ENCODE measurements at regions of chr15 and their contacts with region 1.

Region 1: GRCh38 chr15:77821188-77821958 is 188.7 kb upstream of the LINGO1 start:
- DNase-seq: no peak
- ATAC-seq: peak; percentile 69 to 82 (median 74)
- H3K4me3 ChIP-seq: no peak overlapping the region
- H3K27ac ChIP-seq: no peak overlapping the region
- H3K4me1 ChIP-seq: no peaks in the 10 kb centered on the region
- H3K27me3 ChIP-seq: peaks cover 0 to 54% (median 32%) of the 10 kb centered on the region in 3 donors
- CTCF ChIP-seq: peak; percentile 52

Region 2: DNA sequence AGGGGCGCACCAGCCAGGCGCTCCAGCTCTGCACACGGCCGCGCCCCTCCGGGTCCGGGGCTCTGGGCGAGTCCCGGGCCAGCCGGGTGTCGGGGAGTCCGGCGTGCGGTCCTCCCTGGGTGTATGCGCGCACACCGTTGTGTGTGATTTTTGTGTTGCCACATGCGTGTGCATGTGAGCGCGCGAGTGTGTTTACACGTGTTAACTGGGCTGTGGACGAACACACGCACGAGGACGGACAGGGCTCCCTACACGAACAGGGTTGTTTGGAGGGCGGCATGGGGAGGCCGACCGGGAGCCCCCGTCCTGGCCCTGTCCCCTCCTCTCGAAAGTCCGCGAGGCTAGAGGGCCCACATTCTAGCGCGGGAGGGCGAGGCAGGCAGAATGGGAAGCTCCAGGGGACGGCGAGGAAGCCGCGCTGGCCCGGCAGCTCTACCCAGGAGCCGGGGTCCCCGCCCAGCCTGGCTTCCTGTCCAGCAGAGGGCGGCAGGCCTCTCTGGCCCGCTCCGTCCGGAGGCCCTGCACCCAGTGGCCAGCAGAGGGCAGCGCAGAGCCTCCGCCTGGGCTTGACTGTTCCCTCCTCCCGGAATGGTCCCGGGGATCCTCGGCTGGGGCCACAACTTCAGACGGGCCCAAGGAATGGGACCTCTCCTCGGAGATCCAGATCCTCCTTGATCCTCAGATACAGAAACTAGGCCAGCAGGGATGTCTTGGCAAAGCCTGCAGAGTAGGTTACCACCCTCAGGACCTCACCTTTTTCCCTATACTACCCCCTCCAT is 188.1 kb before region 1 on chr15:
- intact Hi-C with region 1: loop called in 1 of 2 experiments (anchors 1 kb)
- DNase-seq: peak; percentile 91 to 93
- ATAC-seq: peak; percentile 96 to 98 (median 97)
- H3K4me3 ChIP-seq: peak overlapping the region; percentile 65
- H3K27ac ChIP-seq: no peak overlapping the region
- H3K4me1 ChIP-seq: peaks cover 4% of the 10 kb centered on the region
- H3K27me3 ChIP-seq: peaks cover 0 to 60% (median 12%) of the 10 kb centered on the region in 3 donors
- CTCF ChIP-seq: peak; percentile 100

Region 3: DNA sequence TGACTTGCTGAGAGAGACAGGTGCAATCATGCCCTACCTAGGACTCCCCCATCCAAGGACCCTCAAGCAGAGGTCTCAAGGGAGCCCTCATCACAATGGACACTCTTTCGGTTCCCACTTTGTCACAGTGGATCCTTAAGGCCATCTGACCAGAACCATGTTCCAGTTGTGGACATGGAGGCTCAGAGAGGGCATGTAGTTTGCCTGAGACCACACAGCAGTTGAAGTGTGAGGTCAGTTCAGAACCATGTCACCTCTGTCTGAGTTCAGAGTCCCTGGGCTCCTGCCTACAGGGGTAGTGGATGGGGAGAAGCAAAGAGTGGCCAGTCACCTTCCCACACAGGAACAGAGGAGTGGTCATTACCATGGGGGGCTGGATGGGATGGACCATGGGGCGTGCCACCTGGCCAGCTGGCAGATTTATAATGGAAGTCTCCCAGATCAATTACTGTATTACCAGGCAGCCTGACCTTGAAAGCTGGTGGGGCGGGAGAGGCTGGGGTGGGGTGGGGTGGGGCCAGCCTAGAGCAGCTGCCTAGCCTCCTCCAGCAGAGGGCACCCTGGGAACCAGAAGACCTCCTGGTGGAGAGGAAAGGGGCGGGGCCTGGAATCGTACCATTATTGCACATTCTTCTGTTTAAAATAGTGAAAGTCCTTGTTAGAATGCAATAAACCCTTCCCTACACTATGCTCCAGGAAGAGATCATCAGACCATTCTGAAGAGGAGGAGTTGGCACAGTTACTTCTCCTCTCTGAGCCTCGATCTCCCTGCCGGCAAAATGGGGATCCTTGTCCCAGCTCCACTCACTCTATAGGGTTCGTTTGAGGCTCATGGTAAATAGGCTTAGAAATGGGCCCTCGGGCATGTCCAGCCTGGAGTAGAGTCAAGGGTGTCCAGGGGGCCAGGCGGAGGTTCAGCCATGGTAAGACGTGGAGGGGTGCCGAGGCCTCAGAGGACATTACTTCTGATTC is 161.7 kb before region 1 on chr15:
- intact Hi-C with region 1: loop called in 1 of 2 experiments (anchors 5 kb)
- DNase-seq: peak in 1 of 2 donors; percentile 41
- ATAC-seq: peak in 1 of 4 donors; percentile 38
- H3K4me3 ChIP-seq: no peak overlapping the region
- H3K27ac ChIP-seq: no peak overlapping the region
- H3K4me1 ChIP-seq: no peaks in the 10 kb centered on the region
- H3K27me3 ChIP-seq: peaks cover 0 to 30% (median 15%) of the 10 kb centered on the region in 3 donors
- CTCF ChIP-seq: peak; percentile 32

Measured in psoas muscle (tissue), 8 donors.